ENCODE measurements at regions of chr15 and their contacts with region 1.

Region 1: DNA sequence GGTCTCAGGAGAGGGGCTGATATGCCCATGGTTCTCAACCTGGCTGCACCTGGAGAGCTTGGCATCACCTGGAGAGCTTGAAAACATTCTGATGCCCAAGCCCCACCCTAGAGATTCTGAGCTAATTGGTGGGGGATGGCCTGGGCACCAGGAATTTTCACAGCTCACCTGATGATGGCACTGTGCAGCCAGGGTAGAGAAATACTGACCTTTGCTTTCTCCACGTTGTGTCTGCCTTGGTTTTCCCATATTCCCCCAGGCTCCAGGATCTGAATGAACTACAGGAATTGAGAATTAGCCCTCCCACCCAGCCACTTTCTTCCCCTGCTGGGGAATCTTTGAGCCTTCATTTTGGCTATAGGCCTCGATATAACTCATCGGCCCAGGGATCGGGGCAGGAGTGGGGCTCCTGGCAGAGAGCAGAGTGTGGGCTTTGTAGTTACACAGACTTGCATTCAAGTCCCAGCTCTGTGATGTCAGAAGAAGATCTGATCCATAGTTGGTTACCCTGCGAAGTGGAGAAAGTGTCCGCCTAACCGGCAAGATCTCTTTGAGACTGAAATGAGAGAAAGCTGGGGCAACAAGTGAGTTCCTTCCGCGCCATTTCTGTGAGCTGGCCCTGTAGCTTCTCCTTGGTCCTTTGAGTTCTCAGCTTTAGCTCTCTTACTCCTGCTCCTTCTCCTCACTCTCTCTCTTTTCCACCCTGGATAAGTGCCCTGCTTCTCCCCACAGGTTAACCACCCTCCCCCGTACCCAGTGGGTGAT is 33.1 kb upstream of the UBE2Q2 start:
- DNase-seq: no peak
- ATAC-seq: peak in 1 of 2 donors; percentile 64

Region 2: GRCh38 chr15:75916978-75917377 is 106.8 kb after region 1 on chr15:
- intact Hi-C with region 1: loop called (anchors 10 kb)
- DNase-seq: no peak
- ATAC-seq: no peak

Region 3: GRCh38 chr15:75921729-75922703 is 111.8 kb after region 1 on chr15:
- intact Hi-C with region 1: loop called (anchors 10 kb)
- DNase-seq: peak; percentile 35
- ATAC-seq: peak; percentile 75 to 81

Measured in left cardiac atrium (tissue), 4 donors.